Activated CD4-positive, alpha-beta T cell treated with anti-CD3 and anti-CD28 coated beads, Interleukin-2, amount 10 ng/mL, durations not matched to agents 7 days and 5 days (primary cell): ENCODE measurements at regions of chr17 and their contacts with region 1.

Region 1: DNA sequence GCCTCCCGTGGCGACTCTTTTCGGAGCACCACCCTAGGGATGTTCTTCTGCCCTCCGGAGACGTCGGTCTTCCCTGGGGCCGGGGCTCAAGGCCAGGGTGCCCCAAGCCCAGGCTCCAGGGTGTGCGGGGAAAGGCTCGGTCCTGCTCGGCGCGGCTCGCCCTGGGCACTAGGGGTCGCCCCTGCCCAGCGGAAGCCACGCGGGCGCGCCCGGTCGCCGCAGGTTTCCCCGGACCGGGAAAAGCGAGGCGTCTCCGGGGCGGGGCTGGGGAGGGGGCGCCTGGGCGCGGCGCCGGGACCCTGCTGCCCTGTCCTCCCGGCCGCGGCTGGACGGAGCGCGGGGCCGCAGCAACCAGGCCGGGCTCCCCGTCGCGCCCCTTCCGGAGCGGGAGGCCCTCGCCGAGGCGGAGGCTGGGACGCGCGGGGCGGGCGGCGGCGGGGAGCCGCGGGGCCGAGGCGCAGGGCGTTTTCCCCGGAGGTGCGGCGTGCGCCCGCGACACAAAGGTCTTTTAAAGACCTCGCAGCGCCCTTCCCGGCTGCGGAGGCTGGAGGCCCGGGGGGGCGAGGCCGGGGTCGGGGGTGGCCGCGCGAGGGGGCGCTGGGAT is 76.4 kb downstream of the MRC2 start:
- DNase-seq: peak; percentile 65
- H3K4me3 Mint-ChIP-seq: peak overlapping the region; percentile 38
- H3K27ac Mint-ChIP-seq: no peak overlapping the region
- H3K4me1 Mint-ChIP-seq: peaks cover 5% of the 10 kb centered on the region
- H3K27me3 Mint-ChIP-seq: peaks cover 32% of the 10 kb centered on the region

Region 2: DNA sequence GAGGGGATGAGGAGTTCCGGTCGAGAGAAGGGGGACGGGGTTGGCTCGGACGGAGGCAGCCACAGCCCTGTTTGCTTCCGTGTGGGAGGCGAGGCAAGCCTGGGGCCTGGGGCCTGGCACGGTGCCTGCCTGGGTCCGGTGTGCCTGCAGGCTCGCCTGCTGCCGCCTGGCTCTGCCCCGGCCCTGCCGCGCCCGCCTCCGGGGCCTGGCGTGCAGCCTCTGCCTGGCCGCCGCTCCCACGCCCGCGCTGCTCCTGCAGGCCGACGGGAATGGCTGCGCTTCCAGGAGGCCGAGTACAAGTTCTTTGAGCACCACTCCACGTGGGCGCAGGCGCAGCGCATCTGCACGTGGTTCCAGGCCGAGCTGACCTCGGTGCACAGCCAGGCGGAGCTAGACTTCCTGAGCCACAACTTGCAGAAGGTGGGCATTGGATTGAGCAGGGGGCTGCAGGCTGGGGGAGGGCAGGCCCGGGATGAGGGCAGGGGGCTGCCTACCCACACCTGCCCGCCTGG is 23.3 kb before region 1 on chr17:
- CTCF ChIA-PET with region 1: interaction called, 3 read pairs
- POLR2A ChIA-PET with region 1: interaction called, 13 read pairs
- DNase-seq: no peak
- H3K4me3 Mint-ChIP-seq: no peak overlapping the region
- H3K27ac Mint-ChIP-seq: no peak overlapping the region
- H3K4me1 Mint-ChIP-seq: no peaks in the 10 kb centered on the region
- H3K27me3 Mint-ChIP-seq: no peaks in the 10 kb centered on the region

Region 3: GRCh38 chr17:62724398-62725146 is 20.7 kb after region 1 on chr17:
- CTCF ChIA-PET with region 1: no interaction called
- POLR2A ChIA-PET with region 1: no interaction called
- DNase-seq: peak; percentile 78
- H3K4me3 Mint-ChIP-seq: peak overlapping the region; percentile 53
- H3K27ac Mint-ChIP-seq: peak overlapping the region; percentile 88
- H3K4me1 Mint-ChIP-seq: peaks cover 19% of the 10 kb centered on the region
- H3K27me3 Mint-ChIP-seq: peaks cover 63% of the 10 kb centered on the region

Region 4: DNA sequence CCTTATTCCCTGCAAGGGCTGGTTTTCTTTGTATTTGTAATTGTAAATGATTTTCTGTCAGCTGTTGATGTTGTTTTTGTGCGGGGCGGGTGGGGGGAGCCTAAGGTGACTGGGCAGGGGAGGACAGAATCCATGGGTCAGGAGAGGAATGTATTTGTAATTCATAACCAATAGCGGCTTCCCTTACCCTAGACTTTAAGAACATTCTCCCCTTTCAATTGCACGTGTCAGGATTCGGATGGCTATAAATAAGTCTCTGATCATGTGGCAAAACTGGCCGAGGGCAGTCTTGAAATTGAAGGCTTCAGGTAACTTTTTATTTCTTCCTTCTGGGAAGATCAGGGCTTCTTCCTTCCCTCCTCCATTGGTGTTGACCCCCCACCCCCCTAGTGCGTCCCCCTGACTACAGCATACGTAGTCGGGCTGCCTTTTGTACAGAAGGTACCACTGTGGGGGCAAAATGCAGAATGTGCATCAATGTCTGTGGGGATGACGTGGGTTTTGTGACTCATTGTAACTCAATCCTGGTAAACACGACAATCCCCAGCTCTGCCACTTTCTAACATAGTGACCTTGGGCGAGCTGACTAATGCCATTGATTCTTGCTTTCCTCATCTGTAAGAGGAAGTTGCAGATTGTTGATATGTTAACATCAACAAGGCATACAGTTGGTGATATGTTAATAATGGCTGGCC is 88.0 kb after region 1 on chr17:
- CTCF ChIA-PET with region 1: no interaction called
- POLR2A ChIA-PET with region 1: no interaction called
- DNase-seq: no peak
- H3K4me3 Mint-ChIP-seq: no peak overlapping the region
- H3K27ac Mint-ChIP-seq: no peak overlapping the region
- H3K4me1 Mint-ChIP-seq: peaks cover 7% of the 10 kb centered on the region
- H3K27me3 Mint-ChIP-seq: peaks cover 17% of the 10 kb centered on the region

Region 5: DNA sequence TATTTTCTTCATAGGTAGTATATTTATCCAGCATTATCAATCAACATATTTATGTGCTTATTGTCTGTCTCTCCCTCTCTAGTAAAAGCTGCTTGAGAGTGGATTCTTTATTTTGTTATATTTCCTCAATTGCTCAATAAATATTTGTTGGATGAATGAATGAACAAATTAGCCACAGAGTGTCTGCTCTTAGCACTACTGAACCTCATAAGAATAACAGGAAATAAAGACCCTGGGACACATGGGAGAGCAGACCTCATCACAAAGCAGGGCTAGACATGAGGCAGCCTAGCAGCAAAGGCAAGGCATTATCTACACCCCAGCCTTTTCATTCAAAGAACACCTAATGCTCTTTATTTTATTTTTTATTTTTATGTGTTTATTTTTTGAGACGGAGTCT is 227.2 kb after region 1 on chr17:
- CTCF ChIA-PET with region 1: no interaction called
- POLR2A ChIA-PET with region 1: no interaction called
- DNase-seq: no peak
- H3K4me3 Mint-ChIP-seq: no peak overlapping the region
- H3K27ac Mint-ChIP-seq: no peak overlapping the region
- H3K4me1 Mint-ChIP-seq: no peaks in the 10 kb centered on the region
- H3K27me3 Mint-ChIP-seq: peaks cover 16% of the 10 kb centered on the region